Adrenal gland (tissue), 19 donors: ENCODE measurements at regions of chr12 and their contacts with region 1.

Region 1: DNA sequence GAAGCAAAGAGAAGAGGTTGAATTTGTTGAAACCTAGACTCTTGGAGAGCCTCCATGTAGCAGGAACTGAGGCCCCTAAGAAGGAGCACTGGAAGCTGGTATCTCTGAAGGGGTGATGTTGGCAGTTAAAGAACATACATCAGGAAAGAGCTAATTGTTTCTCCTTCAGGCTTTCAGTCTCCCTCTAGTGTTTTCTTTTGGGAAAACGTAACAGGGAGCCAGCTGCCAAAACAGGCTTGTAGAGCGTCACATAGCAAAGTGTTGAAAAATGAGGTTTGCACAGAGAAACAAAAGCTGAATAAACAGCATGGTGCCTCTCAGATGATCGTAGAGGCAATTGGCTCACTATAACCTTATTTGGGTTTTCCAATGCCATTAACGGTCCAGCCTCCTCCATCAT is 46.9 kb upstream of the CAND1 start:
- DNase-seq: peak in 1 of 7 donors; percentile 8
- H3K4me3 ChIP-seq: no peak overlapping the region
- H3K27ac ChIP-seq: no peak overlapping the region
- H3K4me1 ChIP-seq: no peaks in the 10 kb centered on the region
- H3K27me3 ChIP-seq: no peaks in the 10 kb centered on the region
- CTCF ChIP-seq: peak in 5 of 6 experiments; percentile 18 to 44 (median 28)
- POLR2A ChIP-seq: no peak

Region 2: DNA sequence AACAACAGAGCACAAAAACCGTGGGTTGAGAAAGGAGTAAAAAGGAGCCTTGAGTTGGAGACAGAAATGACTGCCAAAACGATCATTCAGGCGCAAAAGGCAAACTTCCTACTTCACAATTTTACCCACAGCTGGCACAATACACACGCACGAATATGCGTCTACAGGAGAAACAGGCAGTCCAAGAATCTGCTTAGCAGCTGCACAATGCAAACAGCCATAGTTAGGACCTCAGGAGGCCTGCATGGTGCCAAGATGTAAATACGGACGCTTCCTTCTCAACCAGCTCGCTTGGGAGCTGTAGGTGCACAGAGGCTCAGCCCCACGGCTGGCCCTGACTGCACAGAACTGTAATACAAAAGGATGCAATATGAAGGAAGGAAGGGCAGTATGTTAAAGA is 203.2 kb before region 1 on chr12:
- intact Hi-C with region 1: loop called in 1 of 2 experiments (anchors 5 kb)
- DNase-seq: no peak
- H3K4me3 ChIP-seq: no peak overlapping the region
- H3K27ac ChIP-seq: no peak overlapping the region
- H3K4me1 ChIP-seq: no peaks in the 10 kb centered on the region
- H3K27me3 ChIP-seq: no peaks in the 10 kb centered on the region
- CTCF ChIP-seq: no peak
- POLR2A ChIP-seq: no peak

Region 3: GRCh38 chr12:67107751-67108269 is 114.5 kb before region 1 on chr12:
- intact Hi-C with region 1: no loop called
- DNase-seq: no peak
- H3K4me3 ChIP-seq: no peak overlapping the region
- H3K27ac ChIP-seq: no peak overlapping the region
- H3K4me1 ChIP-seq: no peaks in the 10 kb centered on the region
- H3K27me3 ChIP-seq: no peaks in the 10 kb centered on the region
- CTCF ChIP-seq: no peak
- POLR2A ChIP-seq: no peak

Region 4: DNA sequence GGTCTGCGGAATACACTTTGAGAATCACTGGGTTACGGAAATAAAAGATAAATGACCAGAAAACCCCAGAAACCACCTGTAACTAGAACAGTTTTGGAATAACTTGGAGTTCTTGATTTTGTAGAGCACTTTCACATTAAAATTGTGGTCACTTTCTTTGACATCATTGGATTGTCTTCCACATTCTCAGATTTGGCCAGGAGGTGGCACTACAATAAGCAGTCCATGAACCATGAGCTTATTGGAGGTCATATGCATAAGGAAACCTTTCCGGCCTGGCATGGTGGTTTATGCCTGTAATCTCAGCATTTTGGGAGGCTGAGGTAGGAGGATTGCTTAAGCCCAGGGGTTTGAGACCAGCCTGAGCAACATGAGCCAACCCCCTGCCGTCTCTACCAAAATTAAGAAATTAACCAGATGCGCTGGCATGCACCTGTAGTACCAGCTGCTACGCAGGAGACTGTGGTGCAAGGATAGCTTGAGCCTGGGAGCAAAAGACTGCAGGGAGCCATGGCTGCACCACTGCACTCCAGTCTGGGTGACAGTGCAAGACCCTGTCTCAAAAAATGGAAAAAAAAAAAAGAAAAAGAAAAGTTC is 60.9 kb before region 1 on chr12:
- intact Hi-C with region 1: loop called in 1 of 2 experiments (anchors 5 kb)
- DNase-seq: peak; percentile 40 to 78 (median 60)
- H3K4me3 ChIP-seq: no peak overlapping the region
- H3K27ac ChIP-seq: no peak overlapping the region
- H3K4me1 ChIP-seq: no peaks in the 10 kb centered on the region
- H3K27me3 ChIP-seq: no peaks in the 10 kb centered on the region
- CTCF ChIP-seq: peak; percentile 50 to 72 (median 60)
- POLR2A ChIP-seq: no peak

Region 5: DNA sequence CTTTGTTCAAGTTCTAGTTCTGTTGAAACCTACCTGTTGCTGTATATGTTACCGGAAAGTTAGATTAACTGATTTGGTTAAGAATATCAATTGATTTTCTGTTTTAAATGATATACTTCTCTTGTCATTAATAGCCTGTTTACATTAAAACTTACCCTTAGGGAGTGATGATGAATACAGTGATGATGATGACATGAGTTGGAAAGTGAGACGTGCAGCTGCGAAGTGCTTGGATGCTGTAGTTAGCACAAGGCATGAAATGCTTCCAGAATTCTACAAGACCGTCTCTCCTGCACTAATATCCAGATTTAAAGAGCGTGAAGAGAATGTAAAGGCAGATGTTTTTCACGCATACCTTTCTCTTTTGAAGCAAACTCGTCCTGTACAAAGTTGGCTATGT is 79.9 kb after region 1 on chr12:
- intact Hi-C with region 1: no loop called
- DNase-seq: no peak
- H3K4me3 ChIP-seq: no peak overlapping the region
- H3K27ac ChIP-seq: no peak overlapping the region
- H3K4me1 ChIP-seq: peaks cover 12 to 17% of the 10 kb centered on the region in 2 donors
- H3K27me3 ChIP-seq: no peaks in the 10 kb centered on the region
- CTCF ChIP-seq: no peak
- POLR2A ChIP-seq: no peak